Keratinocyte (primary cell): ENCODE measurements at regions of chr6 and their contacts with region 1.

Region 1: DNA sequence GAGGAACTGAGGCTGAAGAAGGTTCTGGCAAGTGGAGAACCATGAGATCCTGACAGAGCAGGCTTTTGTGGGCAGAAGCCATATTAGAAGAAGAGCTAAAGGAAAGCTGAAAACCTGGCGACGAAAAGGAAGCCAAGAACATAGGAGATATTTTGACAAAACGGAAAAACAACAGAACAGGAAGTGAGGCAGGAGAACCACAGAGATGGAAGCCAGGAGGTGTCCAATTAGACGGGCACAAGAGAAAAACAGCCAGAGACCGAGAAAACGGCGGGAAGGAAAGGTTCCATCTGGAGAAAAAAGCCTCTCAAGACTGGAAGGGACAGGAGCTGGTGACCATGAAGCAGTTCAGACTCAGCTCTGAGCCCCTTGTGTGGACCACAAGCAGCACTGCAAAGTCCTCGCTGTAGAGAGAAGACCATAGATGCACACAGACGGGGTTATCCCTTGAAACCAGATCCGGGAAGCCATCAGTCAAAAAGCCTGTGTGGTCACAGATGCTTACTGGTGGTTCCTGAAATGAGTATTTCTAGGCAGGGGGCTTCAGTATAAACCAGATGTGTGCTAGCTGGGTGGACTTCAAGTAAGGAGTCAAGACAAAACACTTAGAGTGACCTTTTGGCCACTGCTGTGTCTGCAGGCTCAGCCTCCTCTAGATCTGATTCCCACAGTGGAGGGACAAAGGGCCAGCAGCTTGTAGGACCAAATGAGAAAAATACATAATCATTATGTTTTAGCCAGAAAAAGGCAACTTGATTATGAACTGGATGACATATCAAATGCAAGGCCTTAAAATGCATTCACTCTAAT is 30.7 kb downstream of the SSR1 start:
- DNase-seq: no peak
- H3K4me3 ChIP-seq: no peak overlapping the region
- H3K27ac ChIP-seq: no peak overlapping the region
- H3K4me1 ChIP-seq: no peaks in the 10 kb centered on the region
- H3K27me3 ChIP-seq: no peaks in the 10 kb centered on the region
- CTCF ChIP-seq: no peak

Region 2: DNA sequence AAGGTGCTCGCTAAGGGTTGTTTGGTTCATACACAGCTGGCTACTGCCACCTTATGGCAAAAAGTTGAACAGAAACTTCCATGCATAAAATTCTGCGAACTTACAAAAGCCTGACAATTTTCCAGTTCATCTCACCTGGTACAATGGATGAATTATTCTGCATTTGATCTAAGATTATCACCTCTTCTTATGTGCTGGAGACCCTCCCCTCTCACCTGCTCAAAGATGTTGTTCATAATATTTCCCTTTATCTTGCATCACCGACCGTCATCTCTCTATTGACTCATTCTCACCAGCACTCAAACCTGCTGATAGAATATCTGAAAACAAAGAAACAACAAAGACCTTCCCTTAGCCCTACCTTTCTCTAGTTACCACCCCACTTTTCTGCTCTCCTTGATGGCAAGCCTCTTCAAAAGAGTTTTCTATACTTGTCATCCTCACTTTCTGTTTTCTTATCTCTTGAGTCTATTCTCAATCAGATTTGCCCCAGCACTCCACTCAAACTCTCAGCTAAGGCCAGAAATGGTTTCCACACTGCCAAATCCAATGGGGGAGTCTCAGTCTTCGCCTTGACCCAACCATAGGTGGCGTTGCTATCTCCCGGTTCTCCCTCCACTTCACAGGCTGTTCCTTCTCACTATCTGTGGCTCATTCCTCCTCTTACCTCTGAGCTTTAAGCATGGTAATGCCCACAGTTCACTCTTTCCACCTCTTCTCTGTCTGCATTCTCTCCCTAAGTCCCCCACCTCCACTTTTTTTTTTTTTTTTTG is 333.5 kb after region 1 on chr6:
- dilution Hi-C with region 1: loop called (anchors 25 kb)
- DNase-seq: peak; percentile 7
- H3K4me3 ChIP-seq: peak overlapping the region in 1 of 3 experiments; percentile 46
- H3K27ac ChIP-seq: peak overlapping the region; percentile 29
- H3K4me1 ChIP-seq: peaks cover 17% of the 10 kb centered on the region
- H3K27me3 ChIP-seq: no peaks in the 10 kb centered on the region
- CTCF ChIP-seq: peak; percentile 68 to 72 (median 71)